CD4-positive, alpha-beta memory T cell (primary cell): ENCODE measurements at regions of chr19 and their contacts with region 1.

Region 1: DNA sequence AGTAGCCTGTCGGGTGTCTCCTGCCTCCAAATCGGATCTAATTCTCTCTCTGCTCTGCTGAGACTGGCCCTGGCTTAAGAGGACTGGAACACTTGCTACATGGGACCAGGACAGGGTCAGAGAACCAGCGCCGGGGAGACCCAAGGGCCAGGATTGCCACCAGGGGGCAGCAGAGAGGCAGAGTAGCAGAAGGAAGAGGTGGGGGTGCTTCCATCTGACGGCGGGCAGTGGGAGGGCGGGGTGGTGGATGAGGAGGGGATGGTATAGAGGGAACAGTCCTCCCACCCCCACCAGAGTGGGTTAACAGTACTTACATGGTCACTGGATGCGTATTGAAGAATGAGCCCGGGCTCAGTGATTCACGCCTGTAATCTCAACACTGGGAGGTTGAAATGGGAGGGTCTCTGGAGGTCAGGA is 11.9 kb downstream of the SELENOW start:
- DNase-seq: peak; percentile 66 to 75 (median 71)
- H3K4me3 ChIP-seq: no peak overlapping the region
- H3K4me3 Mint-ChIP-seq: no peak overlapping the region
- H3K27ac ChIP-seq: no peak overlapping the region
- H3K27ac Mint-ChIP-seq: no peak overlapping the region
- H3K4me1 ChIP-seq: no peaks in the 10 kb centered on the region
- H3K4me1 Mint-ChIP-seq: peaks cover under 1 to 9% (median 4%) of the 10 kb centered on the region in 4 donors
- H3K27me3 ChIP-seq: no peaks in the 10 kb centered on the region
- H3K27me3 Mint-ChIP-seq: no peaks in the 10 kb centered on the region

Region 2: DNA sequence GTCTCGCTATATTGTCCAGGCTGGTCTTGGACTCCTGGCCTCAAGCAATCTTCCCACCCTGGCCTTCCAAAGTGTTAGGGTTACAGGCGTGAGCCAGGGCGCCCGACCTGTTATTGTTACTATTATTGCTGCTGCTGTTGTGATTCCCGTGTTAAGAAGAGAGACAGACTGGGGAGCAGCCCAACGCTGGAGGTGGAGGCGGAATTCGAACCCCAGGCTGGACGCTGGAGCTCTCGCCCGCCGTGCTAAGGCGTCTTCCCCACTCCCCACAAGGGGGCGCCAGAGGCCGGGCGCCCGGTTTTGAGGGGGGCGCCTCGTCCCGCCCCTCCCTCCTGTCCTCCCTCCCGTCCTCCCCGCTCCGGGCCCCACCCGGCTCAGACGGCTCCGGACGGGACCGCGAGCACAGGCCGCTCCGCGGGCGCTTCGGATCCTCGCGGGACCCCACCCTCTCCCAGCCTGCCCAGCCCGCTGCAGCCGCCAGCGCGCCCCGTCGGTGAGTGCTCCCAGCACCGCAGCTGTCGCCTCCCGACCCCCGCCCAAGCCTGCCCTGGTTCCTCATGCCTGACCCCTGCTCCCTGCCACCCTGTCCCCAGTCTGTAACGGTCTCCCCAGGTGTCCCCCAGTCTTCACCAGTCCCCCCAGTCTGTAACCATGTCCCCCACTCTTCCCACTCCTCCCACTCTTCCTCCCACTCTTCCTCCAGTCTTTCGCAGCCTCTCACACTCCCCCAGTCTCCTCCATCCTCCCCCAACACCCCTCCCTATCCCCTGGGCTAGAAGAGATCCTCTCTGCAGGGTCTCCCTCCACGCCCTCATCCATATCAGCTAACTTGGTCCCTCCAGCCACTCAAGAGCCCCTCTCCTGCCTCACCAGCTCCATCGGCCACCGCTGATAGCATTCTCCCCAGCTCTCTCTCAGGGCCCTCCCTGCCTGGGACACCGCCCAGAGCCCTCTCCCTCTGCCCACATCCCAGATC is 77.1 kb before region 1 on chr19 and contains the start of gene EHD2:
- CTCF ChIA-PET with region 1: interaction called, 15 read pairs
- POLR2A ChIA-PET with region 1: no interaction called
- intact Hi-C with region 1: no loop called
- DNase-seq: peak in 4 of 5 donors; percentile 11 to 34 (median 21)
- H3K4me3 ChIP-seq: no peak within 1 kb of the TSS
- H3K4me3 Mint-ChIP-seq: peak within 1 kb of the TSS in 3 of 8 donors; percentile 6 to 61 (median 43)
- H3K27ac ChIP-seq: no peak within 1 kb of the TSS
- H3K27ac Mint-ChIP-seq: no peak within 1 kb of the TSS
- H3K4me1 ChIP-seq: peaks cover 4% of the 10 kb centered on the region
- H3K4me1 Mint-ChIP-seq: peaks cover 0 to 3% (median 2%) of the 10 kb centered on the region in 4 donors
- H3K27me3 ChIP-seq: no peaks in the 10 kb centered on the region
- H3K27me3 Mint-ChIP-seq: peaks cover 28 to 31% of the 10 kb centered on the region in 2 donors
- total RNA-seq, gene EHD2: not detected

Region 3: GRCh38 chr19:47765523-47766358 is 24.7 kb before region 1 on chr19:
- CTCF ChIA-PET with region 1: interaction called, 54 read pairs
- POLR2A ChIA-PET with region 1: no interaction called
- intact Hi-C with region 1: loop called (anchors 1 kb)
- DNase-seq: peak; percentile 23 to 44 (median 29)
- H3K4me3 ChIP-seq: no peak overlapping the region
- H3K4me3 Mint-ChIP-seq: no peak overlapping the region
- H3K27ac ChIP-seq: no peak overlapping the region
- H3K27ac Mint-ChIP-seq: no peak overlapping the region
- H3K4me1 ChIP-seq: no peaks in the 10 kb centered on the region
- H3K4me1 Mint-ChIP-seq: peaks cover 0 to 7% (median 0%) of the 10 kb centered on the region in 4 donors
- H3K27me3 ChIP-seq: no peaks in the 10 kb centered on the region
- H3K27me3 Mint-ChIP-seq: no peaks in the 10 kb centered on the region